Activated naive CD4-positive, alpha-beta T cell treated with anti-CD3 and anti-CD28 coated beads, Interleukin-2, amount 10 ng/mL, durations not matched to agents 7 days and 5 days (primary cell): ENCODE measurements at regions of chr15 and their contacts with region 1.

Region 1: DNA sequence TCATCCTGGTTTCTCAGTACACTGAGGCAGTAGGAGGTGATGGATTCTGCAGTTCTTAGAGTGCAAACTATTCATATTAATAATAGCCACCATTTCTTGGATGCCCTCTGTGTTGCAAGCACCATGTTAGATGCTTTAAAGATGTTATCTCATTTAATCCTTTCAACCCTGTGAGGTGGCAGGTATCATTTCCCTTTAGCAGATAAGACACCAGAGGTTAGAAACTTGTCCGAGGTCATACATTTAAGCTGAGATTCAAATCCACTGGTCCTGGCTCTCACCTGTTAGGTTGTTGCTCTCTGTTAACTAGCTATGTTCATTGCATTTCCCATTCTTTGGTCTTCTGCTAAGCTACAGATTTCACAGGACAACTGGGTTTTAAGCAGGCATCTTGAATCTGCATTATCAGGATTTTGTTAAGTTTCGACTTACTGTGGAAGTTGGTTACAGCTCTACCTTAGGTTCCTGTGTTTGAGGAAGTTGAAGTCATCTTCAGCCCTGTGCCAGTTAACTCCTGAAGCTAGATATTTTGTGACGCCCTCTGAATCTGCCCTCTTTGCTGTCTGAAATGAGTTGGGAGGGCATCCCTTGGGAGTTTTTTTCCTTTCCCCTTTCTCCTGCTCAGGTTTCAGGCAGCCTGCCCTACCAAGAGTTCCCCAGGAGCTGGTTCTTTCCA is 6.4 kb downstream of the PDE8A start:
- DNase-seq: no peak
- H3K4me3 Mint-ChIP-seq: peak overlapping the region; percentile 22
- H3K27ac Mint-ChIP-seq: peak overlapping the region; percentile 89
- H3K4me1 Mint-ChIP-seq: peaks cover 71% of the 10 kb centered on the region
- H3K27me3 Mint-ChIP-seq: no peaks in the 10 kb centered on the region

Region 2: GRCh38 chr15:85044251-85044853 is 56.3 kb after region 1 on chr15:
- CTCF ChIA-PET with region 1: interaction called, 16 read pairs
- DNase-seq: peak; percentile 64
- H3K4me3 Mint-ChIP-seq: no peak overlapping the region
- H3K27ac Mint-ChIP-seq: no peak overlapping the region
- H3K4me1 Mint-ChIP-seq: peaks cover 17% of the 10 kb centered on the region
- H3K27me3 Mint-ChIP-seq: no peaks in the 10 kb centered on the region